ENCODE measurements at regions of chr5 and their contacts with region 1.

Region 1: DNA sequence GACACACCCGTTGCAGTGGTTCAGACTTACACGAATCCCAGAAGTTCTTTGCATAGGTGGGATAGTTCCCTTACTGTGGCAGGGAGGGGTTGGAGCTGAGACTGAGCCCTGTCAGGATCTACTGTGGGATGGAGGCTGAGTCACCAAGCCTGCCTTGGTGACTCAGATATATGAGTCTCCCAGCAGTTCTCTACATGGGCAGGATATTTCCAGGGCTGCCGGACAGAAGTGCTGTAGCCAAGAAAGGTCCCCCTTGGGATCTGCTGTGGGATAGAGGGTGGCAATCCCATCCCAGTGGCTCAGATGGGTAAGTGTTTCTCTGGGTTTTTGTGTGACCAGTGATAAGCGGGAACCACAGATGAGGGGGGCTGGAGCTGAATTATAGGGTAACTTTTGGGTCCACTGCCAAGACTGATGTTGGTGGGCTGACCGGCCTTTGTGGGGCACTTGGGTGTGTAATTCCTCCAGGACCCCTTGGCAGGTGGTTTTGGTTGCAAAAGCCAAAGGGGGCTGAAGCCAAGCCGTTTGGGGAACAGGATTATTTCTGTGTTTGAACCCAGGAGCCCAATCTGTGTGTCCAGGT is 18.7 kb downstream of the XRCC4 start:
- DNase-seq: peak; percentile 55
- H3K4me3 Mint-ChIP-seq: peak overlapping the region; percentile 76
- H3K27ac Mint-ChIP-seq: peak overlapping the region; percentile 76
- H3K4me1 Mint-ChIP-seq: peaks cover 34% of the 10 kb centered on the region
- H3K27me3 Mint-ChIP-seq: no peaks in the 10 kb centered on the region
- CTCF ChIP-seq: no peak

Region 2: GRCh38 chr5:82885627-82886389 is 210.2 kb before region 1 on chr5:
- CTCF ChIA-PET with region 1: no interaction called
- intact Hi-C with region 1: loop called (anchors 10 kb)
- DNase-seq: peak; percentile 46
- H3K4me3 Mint-ChIP-seq: peak overlapping the region; percentile 47
- H3K27ac Mint-ChIP-seq: peak overlapping the region; percentile 18
- H3K4me1 Mint-ChIP-seq: peaks cover 29% of the 10 kb centered on the region
- H3K27me3 Mint-ChIP-seq: no peaks in the 10 kb centered on the region
- CTCF ChIP-seq: no peak

Region 3: GRCh38 chr5:83076742-83077661 is 19.0 kb before region 1 on chr5 and contains the starts of genes TMEM167A and XRCC4:
- CTCF ChIA-PET with region 1: no interaction called
- intact Hi-C with region 1: no loop called
- DNase-seq: peak; percentile 96
- H3K4me3 Mint-ChIP-seq: peak within 1 kb of the TSS; percentile 96
- H3K27ac Mint-ChIP-seq: peak within 1 kb of the TSS; percentile 98
- H3K4me1 Mint-ChIP-seq: peaks cover 39% of the 10 kb centered on the region
- H3K27me3 Mint-ChIP-seq: no peaks in the 10 kb centered on the region
- CTCF ChIP-seq: no peak
- total RNA-seq, gene TMEM167A: 161 and 165 TPM in 2 replicates
- total RNA-seq, gene XRCC4: 25.5 and 34.2 TPM in 2 replicates

Region 4: GRCh38 chr5:83149671-83150070 is 53.6 kb after region 1 on chr5:
- CTCF ChIA-PET with region 1: no interaction called
- intact Hi-C with region 1: loop called (anchors 5 kb)
- DNase-seq: no peak
- H3K4me3 Mint-ChIP-seq: no peak overlapping the region
- H3K27ac Mint-ChIP-seq: no peak overlapping the region
- H3K4me1 Mint-ChIP-seq: peaks cover 49% of the 10 kb centered on the region
- H3K27me3 Mint-ChIP-seq: no peaks in the 10 kb centered on the region
- CTCF ChIP-seq: no peak

Region 5: GRCh38 chr5:83204651-83205050 is 108.6 kb after region 1 on chr5:
- CTCF ChIA-PET with region 1: no interaction called
- intact Hi-C with region 1: no loop called
- DNase-seq: no peak
- H3K4me3 Mint-ChIP-seq: no peak overlapping the region
- H3K27ac Mint-ChIP-seq: no peak overlapping the region
- H3K4me1 Mint-ChIP-seq: peaks cover 10% of the 10 kb centered on the region
- H3K27me3 Mint-ChIP-seq: no peaks in the 10 kb centered on the region
- CTCF ChIP-seq: no peak

Region 6: DNA sequence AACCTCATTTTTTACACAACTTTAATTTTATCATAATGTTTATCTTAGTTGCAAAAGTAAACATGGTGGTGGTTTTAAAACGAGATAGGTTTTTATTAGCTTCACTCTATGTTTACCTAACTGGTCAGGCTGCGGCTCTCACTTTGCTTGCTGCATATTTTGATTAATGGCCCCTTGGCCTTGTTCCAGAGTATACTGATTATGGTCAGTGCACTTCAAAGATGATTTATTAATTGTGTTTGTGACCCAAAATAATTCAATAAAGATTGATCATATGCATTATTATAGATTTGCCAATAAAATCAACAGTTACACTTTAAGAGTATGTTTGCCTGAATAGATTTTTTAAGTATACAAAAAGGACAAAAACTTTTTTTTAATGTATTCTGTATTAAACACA is 169.3 kb after region 1 on chr5:
- CTCF ChIA-PET with region 1: no interaction called
- intact Hi-C with region 1: loop called (anchors 5 kb)
- DNase-seq: peak; percentile 72
- H3K4me3 Mint-ChIP-seq: no peak overlapping the region
- H3K27ac Mint-ChIP-seq: no peak overlapping the region
- H3K4me1 Mint-ChIP-seq: no peaks in the 10 kb centered on the region
- H3K27me3 Mint-ChIP-seq: peaks cover 29% of the 10 kb centered on the region
- CTCF ChIP-seq: no peak